B cell (primary cell): ENCODE measurements at regions of chr1 and their contacts with region 1.

Region 1: GRCh38 chr1:182839209-182840065 is at the start of gene DHX9:
- DNase-seq: peak; percentile 97
- ATAC-seq: peak; percentile 80
- H3K4me3 ChIP-seq: peak within 1 kb of the TSS; percentile 85 to 92 (median 92)
- H3K4me3 Mint-ChIP-seq: peak within 1 kb of the TSS; percentile 92
- H3K27ac ChIP-seq: peak within 1 kb of the TSS; percentile 81 to 85
- H3K27ac Mint-ChIP-seq: peak within 1 kb of the TSS; percentile 97
- H3K4me1 ChIP-seq: peaks cover 22 to 28% of the 10 kb centered on the region in 2 donors
- H3K4me1 Mint-ChIP-seq: peaks cover 35% of the 10 kb centered on the region
- H3K27me3 ChIP-seq: no peaks in the 10 kb centered on the region
- H3K27me3 Mint-ChIP-seq: no peaks in the 10 kb centered on the region
- CTCF ChIP-seq: peak; percentile 43
- total RNA-seq, gene DHX9: 207 and 213 TPM in 2 replicates

Region 2: GRCh38 chr1:182629499-182630096 is 209.8 kb before region 1 on chr1:
- CTCF ChIA-PET with region 1: no interaction called
- POLR2A ChIA-PET with region 1: no interaction called
- intact Hi-C with region 1: no loop called
- DNase-seq: peak; percentile 35
- ATAC-seq: peak; percentile 59
- H3K4me3 ChIP-seq: no peak overlapping the region
- H3K4me3 Mint-ChIP-seq: peak overlapping the region; percentile 52
- H3K27ac ChIP-seq: peak overlapping the region in 1 of 2 donors; percentile 52
- H3K27ac Mint-ChIP-seq: peak overlapping the region; percentile 83
- H3K4me1 ChIP-seq: peaks cover 42 to 47% of the 10 kb centered on the region in 2 donors
- H3K4me1 Mint-ChIP-seq: peaks cover 53% of the 10 kb centered on the region
- H3K27me3 ChIP-seq: no peaks in the 10 kb centered on the region
- H3K27me3 Mint-ChIP-seq: no peaks in the 10 kb centered on the region
- CTCF ChIP-seq: no peak

Region 3: DNA sequence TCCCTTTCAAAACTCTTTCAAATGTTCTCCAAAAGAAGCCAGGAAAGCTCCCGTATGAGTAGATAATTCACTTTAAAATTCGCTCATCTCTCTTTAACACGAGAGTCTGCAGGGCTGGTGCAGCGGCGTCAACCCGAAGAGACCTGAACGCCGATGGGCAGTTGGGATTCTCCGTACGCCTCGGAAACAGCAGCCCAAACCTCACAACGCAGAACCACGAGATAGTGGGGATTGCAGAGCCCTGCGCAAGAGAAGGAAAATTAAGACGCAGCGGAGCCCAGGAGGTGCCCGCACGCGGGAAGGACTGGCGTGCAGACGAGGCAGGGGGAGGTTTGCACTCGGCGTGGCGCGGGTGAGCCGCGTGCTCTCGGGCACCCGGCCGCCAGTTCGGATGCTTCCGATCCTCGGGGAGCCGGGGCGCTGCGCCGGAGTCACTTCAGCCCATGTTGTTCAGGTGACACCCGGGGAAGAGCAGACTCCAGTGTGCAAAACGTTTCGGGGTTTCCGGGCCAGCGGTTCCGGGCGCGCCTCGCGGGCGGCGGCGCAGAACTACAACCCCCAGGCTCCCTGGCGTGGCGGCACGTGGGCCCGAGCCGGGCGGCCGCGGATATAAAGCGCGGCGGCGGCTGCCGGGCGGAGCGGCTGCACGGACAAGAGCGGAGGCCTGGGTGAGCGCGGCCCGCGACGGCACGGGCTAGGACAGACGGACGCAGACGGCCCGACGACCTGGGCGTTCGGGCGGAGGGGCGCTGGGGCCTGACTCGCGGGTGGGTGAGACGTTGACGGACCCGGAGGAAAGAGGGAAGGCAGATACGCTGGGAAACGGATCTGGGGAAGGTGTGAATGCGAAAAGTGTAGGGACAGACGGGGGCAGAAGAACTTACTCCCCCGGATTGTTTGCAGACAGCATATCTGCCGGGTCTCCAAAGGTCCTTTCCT is 50.0 kb before region 1 on chr1 and contains the start of gene NPL:
- CTCF ChIA-PET with region 1: interaction called, 10 read pairs
- POLR2A ChIA-PET with region 1: no interaction called
- intact Hi-C with region 1: loop called (anchors 1 kb)
- DNase-seq: peak; percentile 88
- ATAC-seq: peak; percentile 95
- H3K4me3 ChIP-seq: peak within 1 kb of the TSS; percentile 49 to 70 (median 63)
- H3K4me3 Mint-ChIP-seq: peak within 1 kb of the TSS; percentile 90
- H3K27ac ChIP-seq: peak within 1 kb of the TSS in 1 of 2 donors; percentile 63
- H3K27ac Mint-ChIP-seq: peak within 1 kb of the TSS; percentile 87
- H3K4me1 ChIP-seq: peaks cover 9 to 11% of the 10 kb centered on the region in 2 donors
- H3K4me1 Mint-ChIP-seq: peaks cover 16% of the 10 kb centered on the region
- H3K27me3 ChIP-seq: peaks cover 0 to 6% (median 0%) of the 10 kb centered on the region in 4 experiments
- H3K27me3 Mint-ChIP-seq: peaks cover 3% of the 10 kb centered on the region
- CTCF ChIP-seq: no peak
- total RNA-seq, gene NPL: 3.4 and 5.9 TPM in 2 replicates

Region 4: GRCh38 chr1:182855911-182856310 is 16.5 kb after region 1 on chr1:
- CTCF ChIA-PET with region 1: no interaction called
- POLR2A ChIA-PET with region 1: no interaction called
- intact Hi-C with region 1: loop called (anchors 2 kb)
- DNase-seq: no peak
- ATAC-seq: no peak
- H3K4me3 ChIP-seq: no peak overlapping the region
- H3K4me3 Mint-ChIP-seq: no peak overlapping the region
- H3K27ac ChIP-seq: no peak overlapping the region
- H3K27ac Mint-ChIP-seq: no peak overlapping the region
- H3K4me1 ChIP-seq: no peaks in the 10 kb centered on the region
- H3K4me1 Mint-ChIP-seq: no peaks in the 10 kb centered on the region
- H3K27me3 ChIP-seq: no peaks in the 10 kb centered on the region
- H3K27me3 Mint-ChIP-seq: no peaks in the 10 kb centered on the region
- CTCF ChIP-seq: no peak

Region 5: GRCh38 chr1:182877842-182878241 is 38.4 kb after region 1 on chr1:
- CTCF ChIA-PET with region 1: no interaction called
- POLR2A ChIA-PET with region 1: no interaction called
- intact Hi-C with region 1: loop called (anchors 5 kb)
- DNase-seq: no peak
- ATAC-seq: no peak
- H3K4me3 ChIP-seq: no peak overlapping the region
- H3K4me3 Mint-ChIP-seq: no peak overlapping the region
- H3K27ac ChIP-seq: no peak overlapping the region
- H3K27ac Mint-ChIP-seq: no peak overlapping the region
- H3K4me1 ChIP-seq: no peaks in the 10 kb centered on the region
- H3K4me1 Mint-ChIP-seq: no peaks in the 10 kb centered on the region
- H3K27me3 ChIP-seq: no peaks in the 10 kb centered on the region
- H3K27me3 Mint-ChIP-seq: no peaks in the 10 kb centered on the region
- CTCF ChIP-seq: no peak